ENCODE measurements at regions of chr1 and their contacts with region 1.

Region 1: GRCh38 chr1:219189021-219189824 is 15.5 kb downstream of the LYPLAL1 start:
- DNase-seq: no peak
- ATAC-seq: no peak
- H3K4me3 Mint-ChIP-seq: no peak overlapping the region
- H3K27ac Mint-ChIP-seq: no peak overlapping the region
- H3K4me1 Mint-ChIP-seq: peaks cover 20% of the 10 kb centered on the region
- H3K27me3 Mint-ChIP-seq: no peaks in the 10 kb centered on the region

Region 2: DNA sequence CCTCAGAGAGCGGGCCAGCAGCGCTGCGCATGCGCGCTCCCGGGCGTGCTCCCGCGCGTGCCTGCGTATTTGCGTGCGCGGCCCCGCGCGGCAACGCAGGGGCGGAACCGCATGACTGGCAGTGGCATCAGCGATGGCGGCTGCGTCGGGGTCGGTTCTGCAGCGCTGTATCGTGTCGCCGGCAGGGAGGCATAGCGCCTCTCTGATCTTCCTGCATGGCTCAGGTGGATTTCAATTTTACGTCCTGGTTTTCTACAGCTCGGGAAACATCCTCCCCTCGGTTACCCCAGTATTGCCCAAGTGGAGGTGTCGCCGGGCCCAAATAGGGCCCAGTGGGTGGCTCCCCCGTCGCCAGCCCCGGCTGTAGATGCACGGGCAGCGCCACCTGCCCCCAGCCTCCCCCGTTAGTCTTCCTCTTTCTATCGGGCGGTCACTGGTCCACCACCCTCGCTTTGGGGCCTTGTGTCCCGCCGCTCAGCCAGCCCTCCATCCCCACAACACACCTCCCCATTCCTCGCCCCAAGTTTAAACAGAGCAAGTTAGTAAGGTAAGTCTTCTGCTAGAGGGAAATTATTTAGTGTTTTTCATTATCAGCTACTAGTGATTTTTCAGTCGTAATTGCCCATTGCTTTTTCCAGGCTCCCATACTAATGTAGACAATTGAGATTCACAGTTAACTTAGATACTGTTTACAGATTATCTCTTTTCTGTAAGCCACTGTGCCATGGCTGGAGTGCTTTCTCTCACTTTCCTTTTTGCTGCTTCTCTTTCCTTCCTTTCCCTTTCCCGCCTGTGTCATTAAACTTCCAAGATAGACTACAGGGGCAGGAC is 15.2 kb before region 1 on chr1 and contains the start of gene LYPLAL1:
- CTCF ChIA-PET with region 1: interaction called, 4 read pairs
- POLR2A ChIA-PET with region 1: interaction called, 31 read pairs
- DNase-seq: peak; percentile 90
- ATAC-seq: peak; percentile 97
- H3K4me3 Mint-ChIP-seq: peak within 1 kb of the TSS; percentile 96
- H3K27ac Mint-ChIP-seq: peak within 1 kb of the TSS; percentile 97
- H3K4me1 Mint-ChIP-seq: peaks cover 37% of the 10 kb centered on the region
- H3K27me3 Mint-ChIP-seq: no peaks in the 10 kb centered on the region
- total RNA-seq, gene LYPLAL1: 11.6 to 17.8 TPM

Measured in activated CD8-positive, alpha-beta T cell treated with anti-CD3 and anti-CD28 coated beads, Interleukin-2, amount 10 ng/mL, durations not matched to agents 7 days and 5 days (primary cell).